ENCODE measurements at regions of chr4 and their contacts with region 1.

Region 1: DNA sequence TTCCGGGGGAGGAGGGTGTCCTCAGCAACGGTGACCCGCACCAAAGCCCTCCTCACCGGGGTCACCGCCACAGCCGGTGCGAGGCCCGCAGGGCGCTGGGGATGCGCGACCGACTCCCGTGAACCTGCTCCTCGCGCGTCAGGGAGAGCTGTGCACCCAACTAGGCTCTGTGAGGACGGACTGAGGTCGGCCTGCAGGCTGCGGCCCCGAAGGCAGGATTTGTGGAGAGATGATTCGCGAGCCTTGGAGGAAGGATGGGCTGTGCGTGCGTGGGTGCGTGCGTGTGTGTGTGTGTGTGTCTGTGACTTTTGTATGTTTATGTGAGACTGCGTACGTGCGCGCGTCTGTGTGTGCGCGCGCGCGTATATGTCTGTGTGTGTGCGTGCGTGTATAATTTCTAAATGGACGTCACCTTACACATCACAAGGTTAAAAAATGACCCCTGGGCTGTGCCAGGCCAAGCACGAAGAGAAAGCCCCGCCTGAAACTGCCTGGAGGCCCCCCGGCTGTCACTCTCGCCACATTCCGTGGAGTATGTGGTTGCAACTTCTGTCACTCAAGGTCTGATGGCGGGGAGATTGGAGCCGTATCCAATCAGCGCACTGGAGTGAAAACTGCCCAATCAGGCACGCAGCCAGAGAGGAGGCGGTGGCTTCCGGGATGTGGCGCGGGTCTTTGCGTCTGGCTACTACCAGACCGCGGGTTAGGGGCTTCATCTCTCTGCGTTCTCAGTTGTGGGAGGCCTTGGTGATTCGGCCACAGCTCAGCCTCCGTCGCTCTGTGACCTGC is at the start of gene ZNF141:
- DNase-seq: peak; percentile 96
- ATAC-seq: peak; percentile 94
- H3K4me3 ChIP-seq: peak within 1 kb of the TSS; percentile 69
- H3K27ac ChIP-seq: peak within 1 kb of the TSS; percentile 79
- H3K4me1 ChIP-seq: no peaks in the 10 kb centered on the region
- H3K27me3 ChIP-seq: no peaks in the 10 kb centered on the region
- CTCF ChIP-seq: no peak
- POLR2A ChIP-seq: peak; percentile 82
- RAD21 ChIP-seq: no peak
- total RNA-seq, gene ZNF141: 4.7 and 7.8 TPM in 2 replicates

Region 2: DNA sequence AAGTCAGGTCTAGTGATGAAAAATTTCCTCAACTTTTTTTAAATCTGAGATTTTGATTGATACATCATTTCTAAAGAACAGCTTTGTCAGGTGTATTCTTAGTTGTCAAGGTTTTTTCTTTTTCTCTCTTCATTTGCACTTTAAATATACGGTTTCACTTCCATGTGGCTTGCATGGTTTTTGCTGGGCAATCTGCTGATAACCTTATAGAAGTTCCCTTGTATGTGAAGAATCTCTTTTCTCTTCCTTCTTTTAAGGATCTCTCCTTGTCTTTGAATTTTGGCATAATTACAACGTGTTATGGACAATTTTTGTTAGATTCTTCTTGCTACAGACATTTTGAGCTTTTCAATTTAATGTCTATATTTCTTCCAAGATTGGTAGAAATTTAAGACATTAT is 85.2 kb after region 1 on chr4:
- CTCF ChIA-PET with region 1: no interaction called
- POLR2A ChIA-PET with region 1: no interaction called
- dilution Hi-C with region 1: no loop called
- in situ Hi-C with region 1: no loop called
- intact Hi-C with region 1: no loop called
- DNase-seq: no peak
- ATAC-seq: no peak
- H3K4me3 ChIP-seq: no peak overlapping the region
- H3K27ac ChIP-seq: no peak overlapping the region
- H3K4me1 ChIP-seq: no peaks in the 10 kb centered on the region
- H3K27me3 ChIP-seq: no peaks in the 10 kb centered on the region
- CTCF ChIP-seq: no peak
- POLR2A ChIP-seq: no peak
- RAD21 ChIP-seq: no peak

Region 3: DNA sequence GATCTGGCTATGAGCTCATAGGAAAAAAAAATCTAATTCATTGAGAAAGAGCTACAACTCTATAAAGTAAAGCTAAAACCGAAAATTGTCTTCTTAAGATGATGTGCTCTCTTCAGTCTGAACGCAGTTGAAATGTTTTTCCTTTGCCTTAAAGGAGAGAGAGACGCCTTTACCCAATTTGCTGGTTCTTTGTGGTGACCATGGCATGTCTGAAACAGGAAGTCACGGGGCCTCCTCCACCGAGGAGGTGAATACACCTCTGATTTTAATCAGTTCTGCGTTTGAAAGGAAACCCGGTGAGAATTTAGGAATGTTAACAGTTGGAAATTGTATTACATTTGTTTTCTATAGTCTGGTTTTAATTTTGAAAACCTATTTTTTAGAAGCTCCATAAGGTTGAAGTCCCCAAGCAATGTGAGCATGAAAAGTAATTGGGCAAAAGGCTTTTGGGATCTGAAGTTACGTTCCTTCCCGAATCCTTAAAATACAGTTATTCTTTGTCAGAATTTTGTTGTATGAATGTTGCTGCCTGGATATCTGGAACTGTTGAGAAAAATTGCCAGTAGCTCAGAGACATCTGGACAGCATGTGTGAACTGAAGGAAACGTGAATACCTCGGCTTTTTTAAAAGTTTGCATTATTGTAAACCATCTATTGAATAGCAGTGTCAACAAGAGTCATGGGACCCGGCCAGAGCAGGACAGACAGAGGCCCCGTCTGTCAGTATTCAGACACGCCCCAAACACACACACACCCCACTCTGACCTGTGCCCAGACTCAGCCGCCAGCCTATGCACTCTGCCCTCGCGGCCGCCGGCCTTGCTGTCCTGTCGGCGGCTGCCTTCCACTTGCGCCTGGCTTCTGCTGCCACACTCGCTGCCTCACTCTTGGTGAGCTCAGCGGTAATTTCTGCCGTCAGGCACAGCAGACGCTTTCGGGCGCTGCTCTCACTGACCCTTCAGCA is 171.6 kb after region 1 on chr4:
- CTCF ChIA-PET with region 1: no interaction called
- POLR2A ChIA-PET with region 1: no interaction called
- dilution Hi-C with region 1: no loop called
- in situ Hi-C with region 1: no loop called
- intact Hi-C with region 1: no loop called
- DNase-seq: no peak
- ATAC-seq: no peak
- H3K4me3 ChIP-seq: no peak overlapping the region
- H3K27ac ChIP-seq: no peak overlapping the region
- H3K4me1 ChIP-seq: no peaks in the 10 kb centered on the region
- H3K27me3 ChIP-seq: no peaks in the 10 kb centered on the region
- CTCF ChIP-seq: no peak
- POLR2A ChIP-seq: no peak
- RAD21 ChIP-seq: no peak

Region 4: GRCh38 chr4:537436-538264 is 200.3 kb after region 1 on chr4:
- CTCF ChIA-PET with region 1: no interaction called
- POLR2A ChIA-PET with region 1: no interaction called
- dilution Hi-C with region 1: no loop called
- in situ Hi-C with region 1: no loop called
- intact Hi-C with region 1: no loop called
- DNase-seq: no peak
- ATAC-seq: no peak
- H3K4me3 ChIP-seq: no peak overlapping the region
- H3K27ac ChIP-seq: no peak overlapping the region
- H3K4me1 ChIP-seq: no peaks in the 10 kb centered on the region
- H3K27me3 ChIP-seq: no peaks in the 10 kb centered on the region
- CTCF ChIP-seq: no peak
- POLR2A ChIP-seq: no peak
- RAD21 ChIP-seq: no peak

Region 5: GRCh38 chr4:674172-675035 is 337.1 kb after region 1 on chr4 and contains the starts of genes ATP5ME and MYL5:
- CTCF ChIA-PET with region 1: no interaction called
- POLR2A ChIA-PET with region 1: no interaction called
- dilution Hi-C with region 1: no loop called
- in situ Hi-C with region 1: no loop called
- intact Hi-C with region 1: loop called (anchors 10 kb)
- DNase-seq: peak; percentile 95
- ATAC-seq: peak; percentile 89
- H3K4me3 ChIP-seq: peak within 1 kb of the TSS; percentile 73
- H3K27ac ChIP-seq: peak within 1 kb of the TSS; percentile 88
- H3K4me1 ChIP-seq: peaks cover 9% of the 10 kb centered on the region
- H3K27me3 ChIP-seq: no peaks in the 10 kb centered on the region
- CTCF ChIP-seq: peak; percentile 100
- POLR2A ChIP-seq: peak; percentile 77
- RAD21 ChIP-seq: peak; percentile 44
- total RNA-seq, gene ATP5ME: 39.3 and 62.2 TPM in 2 replicates
- total RNA-seq, gene MYL5: 5.0 and 9.1 TPM in 2 replicates

Measured in IMR-90 (cell line).